ENCODE measurements at regions of chr15 and their contacts with region 1.

Region 1: DNA sequence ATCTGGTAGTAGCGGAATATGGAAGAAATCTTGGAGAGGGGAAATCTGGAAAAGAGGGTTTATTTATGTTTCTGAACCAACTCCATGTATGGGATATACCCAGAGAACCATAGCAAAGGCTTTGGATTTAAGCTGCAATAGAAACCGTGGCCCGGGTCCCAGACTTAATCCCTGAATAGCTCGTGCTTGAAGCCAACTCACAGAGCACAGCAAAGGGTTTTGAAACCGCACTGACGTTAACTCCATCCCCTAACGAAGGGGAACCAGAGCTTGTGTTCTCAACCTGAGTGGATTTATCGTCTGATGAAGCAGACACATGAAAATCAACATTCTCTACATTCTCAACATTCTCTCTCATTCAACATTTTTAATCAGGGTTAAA is 154.6 kb downstream of the APBA2 start:
- DNase-seq: no peak
- ATAC-seq: no peak
- H3K4me3 Mint-ChIP-seq: no peak overlapping the region
- H3K27ac Mint-ChIP-seq: peak overlapping the region; percentile 77
- H3K4me1 Mint-ChIP-seq: peaks cover 46% of the 10 kb centered on the region
- H3K27me3 Mint-ChIP-seq: no peaks in the 10 kb centered on the region

Region 2: GRCh38 chr15:29050870-29051269 is 10.5 kb after region 1 on chr15:
- CTCF ChIA-PET with region 1: interaction called, 11 read pairs
- POLR2A ChIA-PET with region 1: no interaction called
- DNase-seq: peak; percentile 63
- ATAC-seq: peak; percentile 93
- H3K4me3 Mint-ChIP-seq: no peak overlapping the region
- H3K27ac Mint-ChIP-seq: peak overlapping the region; percentile 22
- H3K4me1 Mint-ChIP-seq: peaks cover 38% of the 10 kb centered on the region
- H3K27me3 Mint-ChIP-seq: no peaks in the 10 kb centered on the region

Measured in activated CD8-positive, alpha-beta T cell treated with anti-CD3 and anti-CD28 coated beads, Interleukin-2, amount 10 ng/mL, durations not matched to agents 7 days and 5 days (primary cell).